Activated CD4-positive, alpha-beta T cell treated with anti-CD3 and anti-CD28 coated beads, Interleukin-2, amount 10 ng/mL, durations not matched to agents 24 days and 14 days (primary cell): ENCODE measurements at regions of chr2 and their contacts with region 1.

Region 1: GRCh38 chr2:157261199-157261783 is 3.8 kb downstream of the GALNT5 start:
- DNase-seq: peak; percentile 77
- H3K4me3 Mint-ChIP-seq: peak overlapping the region; percentile 61
- H3K27ac Mint-ChIP-seq: peak overlapping the region; percentile 89
- H3K4me1 Mint-ChIP-seq: peaks cover 34% of the 10 kb centered on the region
- H3K27me3 Mint-ChIP-seq: no peaks in the 10 kb centered on the region

Region 2: DNA sequence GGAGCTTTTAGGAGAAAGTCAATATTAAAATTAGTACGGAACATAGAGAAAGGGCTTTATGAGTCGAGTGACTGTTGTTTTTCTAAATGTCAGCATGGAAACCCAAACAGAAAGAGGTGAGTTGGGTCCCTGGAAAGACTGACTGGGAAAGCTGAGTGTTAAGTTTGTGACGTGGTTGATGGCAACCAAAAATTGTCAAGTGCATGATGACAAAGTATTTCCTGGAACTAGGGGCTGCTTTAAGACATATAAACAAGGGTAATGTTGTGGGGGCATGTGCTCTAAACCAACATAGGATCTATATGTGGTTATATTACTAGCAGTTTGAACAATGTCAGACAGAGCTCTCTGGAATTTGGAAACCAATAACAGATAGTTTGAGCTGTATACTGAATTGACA is 876.0 kb before region 1 on chr2:
- intact Hi-C with region 1: loop called (anchors 1 kb)
- DNase-seq: no peak
- H3K4me3 Mint-ChIP-seq: peak overlapping the region; percentile 3
- H3K27ac Mint-ChIP-seq: peak overlapping the region; percentile 78
- H3K4me1 Mint-ChIP-seq: peaks cover 37% of the 10 kb centered on the region
- H3K27me3 Mint-ChIP-seq: no peaks in the 10 kb centered on the region

Region 3: GRCh38 chr2:156908825-156909224 is 352.5 kb before region 1 on chr2:
- intact Hi-C with region 1: loop called (anchors 2 kb)
- DNase-seq: no peak
- H3K4me3 Mint-ChIP-seq: no peak overlapping the region
- H3K27ac Mint-ChIP-seq: no peak overlapping the region
- H3K4me1 Mint-ChIP-seq: peaks cover 7% of the 10 kb centered on the region
- H3K27me3 Mint-ChIP-seq: peaks cover 26% of the 10 kb centered on the region

Region 4: DNA sequence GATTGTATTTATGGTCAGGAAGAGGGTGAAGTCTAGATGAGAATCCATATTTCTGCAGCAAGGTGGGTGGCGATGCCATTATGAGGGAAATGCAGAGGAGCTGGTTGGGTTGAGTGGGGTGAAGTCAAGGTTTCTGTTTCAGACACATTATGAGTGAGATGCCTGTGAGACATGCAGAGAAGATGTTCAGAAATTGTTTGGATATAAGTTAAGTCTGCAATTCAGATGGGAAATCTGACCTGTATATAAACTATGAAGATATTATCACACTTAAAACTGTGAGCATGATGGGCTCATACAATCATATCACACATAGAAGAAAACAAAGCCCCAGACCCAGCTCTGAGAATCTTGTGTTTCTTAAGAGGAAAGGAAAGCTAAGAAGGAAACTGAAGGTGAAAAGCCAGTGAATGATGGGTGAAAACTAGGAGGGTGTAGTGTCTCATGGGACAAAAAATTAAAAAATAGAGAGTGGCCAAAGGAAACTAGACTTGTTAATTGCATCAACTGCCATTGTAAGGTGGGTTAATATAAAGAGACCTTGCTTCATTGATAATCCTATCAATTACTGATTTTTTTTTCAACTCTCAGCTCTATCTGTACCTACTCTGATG is 10.4 kb after region 1 on chr2:
- intact Hi-C with region 1: loop called (anchors 1 kb)
- DNase-seq: no peak
- H3K4me3 Mint-ChIP-seq: no peak overlapping the region
- H3K27ac Mint-ChIP-seq: peak overlapping the region; percentile 0
- H3K4me1 Mint-ChIP-seq: peaks cover 16% of the 10 kb centered on the region
- H3K27me3 Mint-ChIP-seq: peaks cover 10% of the 10 kb centered on the region

Region 5: DNA sequence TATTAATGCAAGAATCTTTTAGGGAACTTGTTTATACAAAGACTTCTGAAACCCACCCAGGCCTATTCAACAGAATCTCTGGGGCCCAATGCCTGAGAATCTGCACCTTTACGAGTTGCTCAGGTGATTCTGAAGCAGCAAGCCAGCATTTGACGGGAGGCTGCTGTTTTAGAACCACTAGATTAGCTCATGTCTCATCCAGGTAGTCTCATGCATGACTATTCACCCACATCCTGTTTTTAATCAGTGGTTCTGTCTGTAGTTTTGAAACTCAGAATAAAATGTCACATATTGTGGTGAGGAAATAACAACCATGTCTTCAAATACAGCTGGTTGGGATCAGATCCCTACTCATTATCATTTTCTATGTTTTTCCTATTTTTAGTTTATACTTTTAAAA is 143.1 kb after region 1 on chr2:
- intact Hi-C with region 1: loop called (anchors 2 kb)
- DNase-seq: peak; percentile 91
- H3K4me3 Mint-ChIP-seq: peak overlapping the region; percentile 71
- H3K27ac Mint-ChIP-seq: peak overlapping the region; percentile 88
- H3K4me1 Mint-ChIP-seq: peaks cover 53% of the 10 kb centered on the region
- H3K27me3 Mint-ChIP-seq: no peaks in the 10 kb centered on the region

Region 6: DNA sequence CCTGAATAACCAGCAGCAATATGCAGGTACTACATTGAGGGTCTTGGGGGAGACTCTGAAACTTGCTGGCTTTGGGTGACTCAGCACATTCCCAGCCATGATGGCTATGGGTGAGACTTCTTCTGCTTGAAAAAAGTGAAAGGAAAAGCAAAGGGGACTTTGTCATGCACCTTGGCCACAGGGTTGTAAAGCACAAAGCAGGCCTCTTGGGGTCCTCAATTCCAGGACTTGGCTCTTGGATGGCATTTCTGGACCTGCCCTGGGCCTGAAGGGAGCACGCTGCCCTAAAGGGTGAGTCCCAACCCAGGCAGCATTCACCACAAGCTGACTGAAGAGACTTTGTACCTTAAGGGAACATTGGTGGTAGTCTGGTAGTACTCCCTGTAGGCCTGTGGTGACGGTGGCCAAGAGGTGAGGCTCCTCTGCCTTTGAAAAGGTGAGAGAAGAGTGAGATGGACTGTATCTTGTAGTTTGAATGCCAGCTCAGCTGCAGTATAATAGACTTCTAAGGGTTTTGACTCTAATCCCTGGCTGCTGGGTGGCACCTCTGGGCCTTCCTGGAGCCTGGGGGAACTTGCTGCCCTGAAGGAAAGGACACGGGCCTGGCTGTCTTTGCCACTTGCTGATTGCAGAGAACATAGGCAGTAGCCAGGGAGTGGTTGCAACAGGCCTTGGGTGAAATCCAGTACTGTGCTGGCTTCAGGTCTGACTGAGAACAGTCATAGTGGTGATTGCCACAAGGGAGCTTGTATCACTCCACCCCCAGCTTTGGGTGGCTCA is 219.1 kb after region 1 on chr2:
- intact Hi-C with region 1: loop called (anchors 5 kb)
- DNase-seq: peak; percentile 88
- H3K4me3 Mint-ChIP-seq: peak overlapping the region; percentile 84
- H3K27ac Mint-ChIP-seq: peak overlapping the region; percentile 96
- H3K4me1 Mint-ChIP-seq: peaks cover 77% of the 10 kb centered on the region
- H3K27me3 Mint-ChIP-seq: no peaks in the 10 kb centered on the region